HEK293 (cell line): ENCODE measurements at regions of chr7 and their contacts with region 1.

Region 1: GRCh38 chr7:137606061-137606674 is 240.6 kb downstream of the DGKI start:
- H3K4me3 ChIP-seq: no peak overlapping the region
- H3K27ac ChIP-seq: no peak overlapping the region
- H3K4me1 ChIP-seq: no peaks in the 10 kb centered on the region
- CTCF ChIP-seq: no peak

Region 2: DNA sequence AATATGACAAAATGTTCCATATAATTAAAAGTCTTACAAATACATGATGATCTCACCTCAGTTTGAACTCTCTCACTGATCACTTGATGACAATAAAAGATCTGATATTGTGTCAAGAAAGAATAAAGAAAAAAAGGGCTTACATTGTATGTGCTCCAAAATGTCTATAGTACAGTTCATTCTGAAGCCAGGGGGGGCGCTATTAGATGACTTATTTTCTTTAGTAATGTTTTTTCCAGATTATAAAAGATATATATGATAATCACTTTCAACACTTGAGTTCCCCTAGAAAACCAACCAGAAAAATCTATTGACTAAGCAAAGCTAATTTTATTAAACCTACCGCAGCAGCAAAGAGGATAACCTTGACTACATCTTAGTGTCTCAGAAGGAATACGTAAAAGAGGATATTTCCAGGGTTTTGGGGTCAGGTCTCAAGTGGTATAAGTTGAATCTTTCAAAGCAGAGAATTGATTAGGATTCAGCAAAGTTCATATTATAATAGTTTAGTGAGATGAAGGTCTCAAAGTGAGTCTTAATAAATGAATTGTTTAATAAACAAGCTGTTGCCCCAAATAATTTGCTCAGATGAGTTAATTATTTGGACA is 318.4 kb before region 1 on chr7:
- CTCF ChIA-PET with region 1: no interaction called
- POLR2A ChIA-PET with region 1: no interaction called
- H3K4me3 ChIP-seq: no peak overlapping the region
- H3K27ac ChIP-seq: no peak overlapping the region
- H3K4me1 ChIP-seq: no peaks in the 10 kb centered on the region
- CTCF ChIP-seq: no peak

Region 3: DNA sequence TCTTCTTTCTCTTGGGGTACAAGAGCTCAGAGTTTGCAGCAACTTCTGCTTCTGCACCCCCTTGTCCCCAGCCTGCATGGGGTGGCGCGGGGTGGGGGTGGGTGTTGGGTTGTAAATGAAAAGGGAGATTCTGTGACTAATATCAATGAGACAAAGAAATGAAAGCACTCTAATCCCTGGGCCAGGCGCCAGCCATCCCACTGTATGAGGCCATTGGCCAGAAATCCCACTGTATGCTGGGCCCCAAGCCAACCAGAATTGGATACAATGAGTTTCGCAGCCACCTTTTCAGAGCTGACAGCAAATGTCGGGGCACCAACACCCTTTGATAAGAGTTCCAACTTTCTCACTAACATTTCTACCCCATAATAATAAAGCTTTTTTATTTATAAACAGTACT is 251.8 kb before region 1 on chr7:
- CTCF ChIA-PET with region 1: no interaction called
- POLR2A ChIA-PET with region 1: no interaction called
- H3K4me3 ChIP-seq: no peak overlapping the region
- H3K27ac ChIP-seq: no peak overlapping the region
- H3K4me1 ChIP-seq: no peaks in the 10 kb centered on the region
- CTCF ChIP-seq: no peak

Region 4: DNA sequence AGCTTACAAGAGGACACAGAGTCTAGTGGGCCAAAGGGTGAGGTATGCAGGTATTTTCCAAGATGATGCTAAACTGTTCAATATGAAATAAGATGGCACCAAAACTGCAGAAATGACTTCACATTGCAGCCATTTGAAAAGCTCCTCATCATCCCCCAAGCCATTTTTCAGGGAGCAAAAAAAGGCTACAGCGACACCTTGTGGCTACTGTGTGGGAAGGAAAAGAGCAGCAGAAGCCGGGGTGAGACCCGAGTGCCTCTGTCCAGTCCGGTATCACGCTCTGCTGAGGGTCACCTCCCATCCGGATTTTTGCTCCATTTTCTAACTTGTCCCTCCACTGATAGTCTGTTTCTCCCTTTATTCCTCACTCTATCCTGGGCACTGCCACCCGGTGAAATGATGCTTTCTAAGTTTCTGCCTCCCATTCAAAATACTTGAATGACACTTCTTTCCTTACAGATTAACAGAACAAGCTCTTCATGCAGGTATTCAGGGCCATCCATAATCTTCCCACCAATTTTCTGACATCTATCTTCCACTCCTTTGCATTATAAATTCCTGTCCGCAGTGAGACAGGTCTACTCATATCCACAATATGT is 20.4 kb after region 1 on chr7:
- CTCF ChIA-PET with region 1: interaction called, 27 read pairs
- POLR2A ChIA-PET with region 1: no interaction called
- H3K4me3 ChIP-seq: no peak overlapping the region
- H3K27ac ChIP-seq: no peak overlapping the region
- H3K4me1 ChIP-seq: no peaks in the 10 kb centered on the region
- CTCF ChIP-seq: no peak

Region 5: DNA sequence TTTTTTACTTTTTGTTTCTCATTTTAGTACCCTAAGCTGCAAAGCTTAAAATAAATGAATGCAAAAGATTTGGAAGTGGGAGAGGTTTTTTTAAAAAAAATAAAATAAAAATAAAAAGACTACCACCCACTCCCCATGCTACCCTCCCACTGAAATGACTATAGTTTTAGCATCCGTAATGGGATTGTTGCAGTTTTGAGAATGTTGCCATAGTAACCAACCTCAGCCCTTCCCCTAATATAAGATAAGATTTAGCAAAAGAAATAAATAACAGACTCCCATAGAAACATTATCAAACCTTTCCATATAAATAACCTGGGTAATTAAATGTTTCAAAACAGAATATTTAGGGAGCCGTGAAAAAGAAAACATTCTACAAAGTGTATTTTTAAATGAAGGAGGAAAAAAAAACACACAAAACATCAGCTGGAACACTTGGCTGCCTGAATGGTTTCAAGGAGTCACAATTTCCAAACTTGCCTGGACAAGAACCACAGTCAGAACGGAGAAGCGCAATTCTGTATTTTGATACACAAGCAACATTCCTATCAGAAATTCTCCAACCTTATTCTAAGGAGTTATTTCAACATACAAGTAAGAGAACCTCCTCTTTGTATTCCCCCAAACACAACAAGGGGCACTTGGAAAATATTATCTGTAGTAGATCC is 183.2 kb after region 1 on chr7:
- CTCF ChIA-PET with region 1: no interaction called
- POLR2A ChIA-PET with region 1: no interaction called
- H3K4me3 ChIP-seq: no peak overlapping the region
- H3K27ac ChIP-seq: no peak overlapping the region
- H3K4me1 ChIP-seq: no peaks in the 10 kb centered on the region
- CTCF ChIP-seq: no peak

Region 6: DNA sequence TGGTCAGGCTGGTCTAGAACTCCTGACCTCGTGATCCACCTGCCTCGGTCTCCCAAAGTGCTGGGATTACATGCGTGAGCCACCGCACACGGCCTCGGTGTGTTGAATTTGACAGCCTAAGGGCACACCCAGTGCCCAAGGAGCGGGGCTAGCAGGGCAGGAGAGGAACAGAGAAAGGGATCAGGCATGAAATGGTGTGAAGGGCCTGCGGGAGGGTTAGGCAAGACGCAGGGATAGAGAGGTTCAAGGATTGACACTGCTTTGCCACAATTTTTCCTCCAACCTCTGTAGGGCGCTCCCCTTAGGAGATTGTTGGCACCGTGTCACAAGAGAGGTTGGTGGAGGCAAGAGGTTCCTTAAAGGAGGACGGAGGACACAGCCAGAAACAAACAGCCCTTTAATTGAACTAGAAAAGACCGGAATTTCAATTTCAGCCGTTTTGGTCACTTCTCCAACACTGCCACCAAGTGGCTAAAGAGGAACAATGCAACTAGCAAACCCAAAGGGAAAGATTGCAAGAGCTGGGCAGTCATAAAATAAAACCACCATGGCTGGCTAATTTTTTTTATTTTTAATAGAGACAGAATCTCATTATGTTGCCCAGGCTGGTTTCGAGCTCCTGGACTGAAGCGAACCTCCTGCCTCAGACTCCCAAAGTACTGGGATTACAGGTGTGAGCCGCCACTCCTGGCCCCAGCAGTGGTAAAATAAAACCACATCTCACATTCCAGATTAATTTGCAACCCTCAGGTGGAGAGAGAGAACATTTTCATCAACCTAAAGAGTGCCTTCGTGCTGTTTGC is 402.6 kb after region 1 on chr7:
- CTCF ChIA-PET with region 1: interaction called, 11 read pairs
- POLR2A ChIA-PET with region 1: no interaction called
- H3K4me3 ChIP-seq: no peak overlapping the region
- H3K27ac ChIP-seq: no peak overlapping the region
- H3K4me1 ChIP-seq: no peaks in the 10 kb centered on the region
- CTCF ChIP-seq: peak; percentile 69